ENCODE measurements at regions of chr9 and their contacts with region 1.

Region 1: DNA sequence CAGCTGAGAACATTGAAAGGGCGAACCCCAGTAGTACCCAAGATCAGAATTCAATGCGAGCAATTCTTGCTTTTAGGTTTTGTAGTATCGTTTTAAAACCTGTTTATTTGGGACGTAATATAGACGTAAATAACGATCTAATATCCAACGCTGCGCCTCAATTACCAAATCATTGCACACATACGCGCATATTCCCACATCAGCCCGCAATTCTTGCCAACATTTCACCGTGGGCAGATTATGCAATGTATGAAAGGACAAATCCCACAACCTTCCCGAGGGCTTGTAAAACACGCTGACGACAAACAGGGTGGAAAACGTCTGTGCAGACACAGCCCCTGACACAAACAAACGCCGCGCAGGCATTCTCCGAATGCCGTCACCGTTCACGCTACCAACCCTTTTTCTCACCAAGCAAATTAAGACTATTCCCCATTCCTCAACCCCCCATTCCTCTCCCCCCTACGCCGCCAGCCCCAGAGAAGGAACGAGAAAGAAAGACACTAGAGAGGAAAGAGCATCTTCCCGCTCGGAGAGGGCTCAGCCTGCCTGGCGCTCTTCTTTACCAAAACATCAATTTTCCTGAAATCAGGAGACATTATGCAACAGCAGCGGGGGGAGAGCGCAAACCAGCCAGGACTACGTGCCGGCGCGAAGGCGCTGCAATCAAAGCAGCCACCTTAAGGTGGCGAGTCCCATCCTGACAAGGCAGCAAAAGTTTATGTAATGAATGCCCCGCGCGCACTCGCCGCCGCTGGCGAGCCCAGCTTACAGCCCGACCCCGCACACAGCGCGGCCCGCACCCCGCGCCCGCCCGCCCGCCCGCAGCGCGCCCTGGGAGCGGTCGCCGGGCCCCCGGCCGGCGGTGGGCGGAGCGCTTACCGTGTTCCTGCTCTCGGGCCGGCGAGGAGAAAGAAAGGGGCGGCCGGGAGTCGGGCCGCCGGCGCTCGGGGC is 597 bp downstream of the NFIL3 start:
- DNase-seq: peak; percentile 82
- ATAC-seq: peak; percentile 47
- H3K4me3 ChIP-seq: peak overlapping the region; percentile 46 to 91 (median 70)
- H3K4me3 Mint-ChIP-seq: peak overlapping the region; percentile 95
- H3K27ac ChIP-seq: no peak overlapping the region
- H3K27ac Mint-ChIP-seq: peak overlapping the region; percentile 77
- H3K4me1 ChIP-seq: peaks cover 39 to 50% of the 10 kb centered on the region in 2 donors
- H3K4me1 Mint-ChIP-seq: peaks cover 41% of the 10 kb centered on the region
- H3K27me3 ChIP-seq: peaks cover 0 to 46% (median 33%) of the 10 kb centered on the region in 4 experiments
- H3K27me3 Mint-ChIP-seq: peaks cover 50% of the 10 kb centered on the region
- CTCF ChIP-seq: peak; percentile 35

Region 2: DNA sequence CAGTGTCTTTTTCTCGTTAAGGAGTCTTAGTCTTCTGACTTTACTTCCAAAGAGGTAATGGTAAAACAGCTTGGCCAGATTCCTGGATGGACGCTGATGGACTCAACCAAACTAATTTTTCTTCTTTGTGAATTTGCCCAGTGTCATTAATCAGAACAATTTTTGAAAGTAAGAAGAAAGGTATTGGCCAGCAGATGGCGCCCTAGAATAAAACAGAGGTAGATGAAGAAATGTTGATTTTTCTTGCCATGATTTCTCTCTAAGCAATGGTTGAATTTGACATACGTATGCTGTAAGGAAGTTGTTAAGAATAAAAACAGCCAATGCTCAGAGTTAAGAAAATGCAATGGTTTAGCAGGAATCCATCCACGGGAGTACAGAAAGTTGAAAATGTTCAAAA is 1280.5 kb before region 1 on chr9:
- CTCF ChIA-PET with region 1: interaction called, 3 read pairs
- POLR2A ChIA-PET with region 1: no interaction called
- intact Hi-C with region 1: loop called (anchors 5 kb)
- DNase-seq: peak; percentile 80
- ATAC-seq: no peak
- H3K4me3 ChIP-seq: no peak overlapping the region
- H3K4me3 Mint-ChIP-seq: no peak overlapping the region
- H3K27ac ChIP-seq: no peak overlapping the region
- H3K27ac Mint-ChIP-seq: no peak overlapping the region
- H3K4me1 ChIP-seq: no peaks in the 10 kb centered on the region
- H3K4me1 Mint-ChIP-seq: peaks cover 4% of the 10 kb centered on the region
- H3K27me3 ChIP-seq: peaks cover 0 to 4% (median 0%) of the 10 kb centered on the region in 4 experiments
- H3K27me3 Mint-ChIP-seq: peaks cover 17% of the 10 kb centered on the region
- CTCF ChIP-seq: peak; percentile 76

Region 3: GRCh38 chr9:90773617-90774016 is 649.4 kb before region 1 on chr9:
- CTCF ChIA-PET with region 1: no interaction called
- POLR2A ChIA-PET with region 1: no interaction called
- intact Hi-C with region 1: no loop called
- DNase-seq: peak; percentile 58
- ATAC-seq: peak; percentile 28
- H3K4me3 ChIP-seq: peak overlapping the region in 1 of 5 experiments; percentile 21
- H3K4me3 Mint-ChIP-seq: peak overlapping the region; percentile 38
- H3K27ac ChIP-seq: peak overlapping the region; percentile 37 to 57
- H3K27ac Mint-ChIP-seq: peak overlapping the region; percentile 86
- H3K4me1 ChIP-seq: peaks cover 60 to 67% of the 10 kb centered on the region in 2 donors
- H3K4me1 Mint-ChIP-seq: peaks cover 67% of the 10 kb centered on the region
- H3K27me3 ChIP-seq: no peaks in the 10 kb centered on the region
- H3K27me3 Mint-ChIP-seq: no peaks in the 10 kb centered on the region
- CTCF ChIP-seq: peak; percentile 26

Region 4: GRCh38 chr9:90985631-90986030 is 437.4 kb before region 1 on chr9:
- CTCF ChIA-PET with region 1: interaction called, 13 read pairs
- POLR2A ChIA-PET with region 1: no interaction called
- intact Hi-C with region 1: loop called (anchors 2 kb)
- DNase-seq: no peak
- ATAC-seq: no peak
- H3K4me3 ChIP-seq: no peak overlapping the region
- H3K4me3 Mint-ChIP-seq: no peak overlapping the region
- H3K27ac ChIP-seq: no peak overlapping the region
- H3K27ac Mint-ChIP-seq: no peak overlapping the region
- H3K4me1 ChIP-seq: no peaks in the 10 kb centered on the region
- H3K4me1 Mint-ChIP-seq: no peaks in the 10 kb centered on the region
- H3K27me3 ChIP-seq: peaks cover 0 to 4% (median 0%) of the 10 kb centered on the region in 4 experiments
- H3K27me3 Mint-ChIP-seq: peaks cover 11% of the 10 kb centered on the region
- CTCF ChIP-seq: no peak

Region 5: GRCh38 chr9:91089405-91090129 is 333.5 kb before region 1 on chr9:
- CTCF ChIA-PET with region 1: interaction called, 31 read pairs
- POLR2A ChIA-PET with region 1: no interaction called
- intact Hi-C with region 1: loop called (anchors 1 kb)
- DNase-seq: peak; percentile 37
- ATAC-seq: no peak
- H3K4me3 ChIP-seq: no peak overlapping the region
- H3K4me3 Mint-ChIP-seq: no peak overlapping the region
- H3K27ac ChIP-seq: no peak overlapping the region
- H3K27ac Mint-ChIP-seq: no peak overlapping the region
- H3K4me1 ChIP-seq: no peaks in the 10 kb centered on the region
- H3K4me1 Mint-ChIP-seq: peaks cover 2% of the 10 kb centered on the region
- H3K27me3 ChIP-seq: no peaks in the 10 kb centered on the region
- H3K27me3 Mint-ChIP-seq: no peaks in the 10 kb centered on the region
- CTCF ChIP-seq: peak; percentile 10

Region 6: DNA sequence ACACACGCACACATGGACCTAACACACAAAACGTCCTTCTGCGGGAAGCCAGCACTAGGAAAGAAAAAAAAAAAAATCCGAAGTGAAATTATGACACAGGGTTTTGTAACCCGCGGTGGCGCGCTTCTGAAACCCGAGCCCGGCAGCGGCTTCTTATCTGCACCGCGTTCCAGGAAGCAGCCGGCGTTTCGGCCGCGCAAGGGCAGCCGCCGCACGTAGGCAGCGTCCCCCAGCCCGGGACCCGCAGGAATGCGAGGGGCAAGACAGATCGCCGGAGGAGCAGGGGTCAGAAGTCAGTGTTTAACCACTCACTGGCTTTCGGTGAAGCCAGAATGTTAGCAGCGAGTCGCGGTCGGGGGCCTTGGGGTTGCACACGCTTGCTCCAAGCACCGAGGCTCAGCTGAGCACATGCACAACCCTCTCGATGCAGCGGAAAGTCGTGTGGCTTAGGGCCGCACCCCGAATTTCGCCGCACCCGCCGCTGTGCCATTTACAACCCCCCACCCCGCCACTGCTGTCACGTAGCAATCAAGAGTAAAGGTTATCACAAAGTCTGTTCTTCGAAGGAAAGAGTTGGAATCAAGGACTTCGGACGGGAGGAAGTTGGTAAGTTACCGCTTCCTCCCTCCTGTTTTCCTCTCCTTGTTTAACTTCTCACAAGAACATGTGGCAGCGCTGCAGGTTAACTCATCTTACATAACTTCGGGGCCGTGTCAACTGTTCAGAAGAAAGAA is 229.2 kb before region 1 on chr9:
- CTCF ChIA-PET with region 1: no interaction called
- POLR2A ChIA-PET with region 1: no interaction called
- intact Hi-C with region 1: loop called (anchors 5 kb)
- DNase-seq: peak; percentile 76
- ATAC-seq: peak; percentile 69
- H3K4me3 ChIP-seq: peak overlapping the region; percentile 53 to 68 (median 58)
- H3K4me3 Mint-ChIP-seq: peak overlapping the region; percentile 92
- H3K27ac ChIP-seq: peak overlapping the region; percentile 35 to 77
- H3K27ac Mint-ChIP-seq: peak overlapping the region; percentile 88
- H3K4me1 ChIP-seq: peaks cover 27 to 46% of the 10 kb centered on the region in 2 donors
- H3K4me1 Mint-ChIP-seq: peaks cover 28% of the 10 kb centered on the region
- H3K27me3 ChIP-seq: no peaks in the 10 kb centered on the region
- H3K27me3 Mint-ChIP-seq: no peaks in the 10 kb centered on the region
- CTCF ChIP-seq: no peak

Region 7: DNA sequence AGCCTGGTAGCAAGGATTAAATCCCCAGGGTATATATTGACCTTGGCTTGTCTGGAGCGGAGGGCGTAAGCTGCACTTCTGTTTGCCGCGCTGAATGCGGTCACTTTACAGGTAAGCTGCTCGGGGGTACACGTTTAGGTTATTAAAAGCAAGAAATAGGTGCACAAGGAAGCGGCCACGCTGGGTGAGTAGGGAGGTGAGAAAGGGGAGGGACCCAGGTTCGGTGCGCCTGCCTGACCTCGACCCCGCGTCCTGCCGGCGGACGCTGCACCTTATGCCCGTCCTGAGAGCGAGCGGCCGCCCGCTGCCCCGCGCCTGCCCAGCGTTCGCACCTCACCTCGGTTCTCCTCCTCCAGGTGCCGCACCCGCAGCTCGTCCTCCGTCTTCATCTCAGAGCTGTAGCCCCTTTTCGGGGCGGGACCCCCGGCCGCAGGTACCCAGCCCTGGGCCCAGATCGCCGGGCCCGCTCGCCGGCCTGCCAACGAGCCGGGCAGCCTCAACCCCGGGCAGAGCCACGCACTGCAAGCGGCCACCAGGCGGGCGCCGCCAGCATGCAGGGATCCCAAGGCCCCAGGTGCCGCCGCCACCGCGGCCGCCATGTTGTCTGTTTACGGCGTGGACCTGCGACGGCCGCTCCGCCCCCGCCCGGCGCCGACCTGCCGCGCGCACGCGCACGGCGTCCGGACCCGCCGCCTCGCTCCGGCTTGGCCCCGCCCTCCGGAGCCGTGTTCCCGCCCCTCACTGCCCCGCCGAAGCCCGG is 61.6 kb before region 1 on chr9 and contains the start of gene AUH:
- CTCF ChIA-PET with region 1: interaction called, 20 read pairs
- POLR2A ChIA-PET with region 1: interaction called, 3 read pairs
- intact Hi-C with region 1: loop called (anchors 1 kb)
- DNase-seq: peak; percentile 92
- ATAC-seq: peak; percentile 96
- H3K4me3 ChIP-seq: peak within 1 kb of the TSS; percentile 70 to 94 (median 78)
- H3K4me3 Mint-ChIP-seq: peak within 1 kb of the TSS; percentile 98
- H3K27ac ChIP-seq: peak within 1 kb of the TSS; percentile 45 to 77
- H3K27ac Mint-ChIP-seq: peak within 1 kb of the TSS; percentile 95
- H3K4me1 ChIP-seq: peaks cover 16 to 19% of the 10 kb centered on the region in 2 donors
- H3K4me1 Mint-ChIP-seq: peaks cover 37% of the 10 kb centered on the region
- H3K27me3 ChIP-seq: no peaks in the 10 kb centered on the region
- H3K27me3 Mint-ChIP-seq: no peaks in the 10 kb centered on the region
- CTCF ChIP-seq: peak; percentile 36
- total RNA-seq, gene AUH: 29.1 and 32.7 TPM in 2 replicates

Region 8: GRCh38 chr9:91727316-91727861 is 304.4 kb after region 1 on chr9:
- CTCF ChIA-PET with region 1: interaction called, 6 read pairs
- POLR2A ChIA-PET with region 1: no interaction called
- intact Hi-C with region 1: loop called (anchors 2 kb)
- DNase-seq: peak; percentile 67
- ATAC-seq: peak; percentile 89
- H3K4me3 ChIP-seq: no peak overlapping the region
- H3K4me3 Mint-ChIP-seq: no peak overlapping the region
- H3K27ac ChIP-seq: no peak overlapping the region
- H3K27ac Mint-ChIP-seq: no peak overlapping the region
- H3K4me1 ChIP-seq: no peaks in the 10 kb centered on the region
- H3K4me1 Mint-ChIP-seq: no peaks in the 10 kb centered on the region
- H3K27me3 ChIP-seq: no peaks in the 10 kb centered on the region
- H3K27me3 Mint-ChIP-seq: no peaks in the 10 kb centered on the region
- CTCF ChIP-seq: peak; percentile 79

Region 9: GRCh38 chr9:92064711-92065110 is 641.7 kb after region 1 on chr9:
- CTCF ChIA-PET with region 1: no interaction called
- POLR2A ChIA-PET with region 1: no interaction called
- intact Hi-C with region 1: no loop called
- DNase-seq: no peak
- ATAC-seq: no peak
- H3K4me3 ChIP-seq: no peak overlapping the region
- H3K4me3 Mint-ChIP-seq: no peak overlapping the region
- H3K27ac ChIP-seq: no peak overlapping the region
- H3K27ac Mint-ChIP-seq: no peak overlapping the region
- H3K4me1 ChIP-seq: no peaks in the 10 kb centered on the region
- H3K4me1 Mint-ChIP-seq: no peaks in the 10 kb centered on the region
- H3K27me3 ChIP-seq: no peaks in the 10 kb centered on the region
- H3K27me3 Mint-ChIP-seq: no peaks in the 10 kb centered on the region
- CTCF ChIP-seq: no peak

Measured in B cell (primary cell).